Activated T-helper 2 cell treated with anti-CD3 and anti-CD28 coated beads, Interferon-gamma antibody, Interleukin-2, Interleukin-4, amounts not matched to agents 10 μg/mL and 5 μg/mL and 100 μg/mL, durations not matched to agents 14 hours and 24 hours and 36 hours (primary cell): ENCODE measurements at regions of chr3 and their contacts with region 1.

Region 1: DNA sequence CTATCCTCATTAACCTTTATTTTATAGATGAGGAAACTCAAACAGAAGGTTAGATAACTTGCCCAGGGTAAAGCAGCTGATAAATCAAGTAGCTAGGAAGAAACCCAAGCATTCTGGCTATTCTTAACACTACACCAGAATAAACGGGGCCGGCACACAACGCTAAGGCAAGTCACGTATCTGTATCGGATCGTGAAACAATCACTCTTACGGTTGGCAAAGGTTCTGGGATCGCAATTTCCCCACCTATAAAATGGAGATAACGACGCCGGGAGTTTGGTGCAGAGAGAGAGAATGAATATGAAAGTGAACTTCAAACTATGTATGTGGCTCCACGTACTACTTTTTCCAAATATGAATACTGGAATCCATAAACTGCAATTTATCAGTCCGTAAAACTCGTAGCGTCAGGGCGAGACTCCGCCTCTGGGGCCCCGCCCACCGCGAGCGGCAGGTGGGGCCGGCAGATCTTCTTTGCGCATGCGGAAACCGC is 252 bp upstream of the ARMC8 start:
- DNase-seq: peak; percentile 84
- H3K4me3 Mint-ChIP-seq: peak overlapping the region; percentile 90
- H3K27ac Mint-ChIP-seq: peak overlapping the region; percentile 91
- H3K4me1 Mint-ChIP-seq: peaks cover 25% of the 10 kb centered on the region
- H3K27me3 Mint-ChIP-seq: peaks cover 20% of the 10 kb centered on the region

Region 2: DNA sequence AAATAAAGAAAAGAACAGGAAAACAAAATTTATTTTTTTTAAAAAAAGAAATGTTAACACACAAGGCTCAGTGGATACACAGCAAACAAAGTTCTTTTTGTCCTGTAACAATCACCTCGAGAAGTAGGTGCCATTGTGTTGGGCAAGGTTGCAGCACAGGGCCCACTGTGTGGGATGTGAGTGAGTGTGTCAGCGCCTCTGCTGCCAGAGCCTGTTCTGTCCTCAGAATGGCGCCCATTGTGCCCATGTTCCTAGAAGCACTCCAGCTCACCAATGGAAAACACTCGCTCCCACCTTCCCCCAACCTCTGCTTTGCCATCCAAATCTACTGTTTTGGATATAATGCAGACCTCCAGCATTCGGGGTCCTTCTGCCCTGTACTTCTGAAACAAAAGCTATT is 261.8 kb before region 1 on chr3:
- intact Hi-C with region 1: no loop called
- DNase-seq: no peak
- H3K4me3 Mint-ChIP-seq: no peak overlapping the region
- H3K27ac Mint-ChIP-seq: no peak overlapping the region
- H3K4me1 Mint-ChIP-seq: no peaks in the 10 kb centered on the region
- H3K27me3 Mint-ChIP-seq: no peaks in the 10 kb centered on the region

Region 3: DNA sequence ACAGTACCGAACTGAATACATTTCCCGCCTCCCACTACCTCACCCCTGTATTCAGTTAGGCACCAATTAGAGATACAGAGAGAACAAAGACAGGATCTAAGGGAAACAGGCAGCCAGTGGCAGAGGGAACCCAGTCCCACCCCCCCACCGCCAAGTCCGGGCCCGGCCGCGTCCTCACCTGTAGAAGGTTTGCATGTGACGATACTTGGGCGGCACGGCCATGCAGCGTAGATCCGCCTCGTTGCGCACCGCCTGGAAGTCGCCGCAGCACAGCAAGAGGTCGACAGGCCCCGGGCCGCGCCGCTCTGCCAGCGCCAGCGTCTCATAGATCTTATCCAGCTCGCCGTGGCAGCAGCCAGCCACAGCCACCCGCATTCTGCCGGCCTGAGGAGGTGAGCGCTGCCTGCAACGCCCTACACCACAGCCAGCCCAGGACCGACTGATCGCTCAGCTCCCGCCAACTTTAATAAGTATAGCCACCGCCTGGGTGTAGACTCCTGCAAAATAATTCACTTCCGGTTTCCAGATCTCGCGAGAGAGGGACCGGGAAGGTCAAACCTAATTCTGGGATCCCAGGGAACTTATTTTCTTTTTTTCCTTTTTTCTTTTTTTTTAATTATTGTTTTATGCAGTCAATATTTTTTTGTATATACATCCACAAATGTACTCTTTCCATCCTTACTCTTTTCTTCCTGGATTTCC is 12.3 kb before region 1 on chr3 and contains the start of gene DBR1:
- intact Hi-C with region 1: loop called (anchors 1 kb)
- DNase-seq: peak; percentile 66
- H3K4me3 Mint-ChIP-seq: peak within 1 kb of the TSS; percentile 94
- H3K27ac Mint-ChIP-seq: peak within 1 kb of the TSS; percentile 92
- H3K4me1 Mint-ChIP-seq: peaks cover 29% of the 10 kb centered on the region
- H3K27me3 Mint-ChIP-seq: peaks cover 4% of the 10 kb centered on the region
- total RNA-seq, gene DBR1: 22.0 and 22.3 TPM in 2 replicates

Region 4: DNA sequence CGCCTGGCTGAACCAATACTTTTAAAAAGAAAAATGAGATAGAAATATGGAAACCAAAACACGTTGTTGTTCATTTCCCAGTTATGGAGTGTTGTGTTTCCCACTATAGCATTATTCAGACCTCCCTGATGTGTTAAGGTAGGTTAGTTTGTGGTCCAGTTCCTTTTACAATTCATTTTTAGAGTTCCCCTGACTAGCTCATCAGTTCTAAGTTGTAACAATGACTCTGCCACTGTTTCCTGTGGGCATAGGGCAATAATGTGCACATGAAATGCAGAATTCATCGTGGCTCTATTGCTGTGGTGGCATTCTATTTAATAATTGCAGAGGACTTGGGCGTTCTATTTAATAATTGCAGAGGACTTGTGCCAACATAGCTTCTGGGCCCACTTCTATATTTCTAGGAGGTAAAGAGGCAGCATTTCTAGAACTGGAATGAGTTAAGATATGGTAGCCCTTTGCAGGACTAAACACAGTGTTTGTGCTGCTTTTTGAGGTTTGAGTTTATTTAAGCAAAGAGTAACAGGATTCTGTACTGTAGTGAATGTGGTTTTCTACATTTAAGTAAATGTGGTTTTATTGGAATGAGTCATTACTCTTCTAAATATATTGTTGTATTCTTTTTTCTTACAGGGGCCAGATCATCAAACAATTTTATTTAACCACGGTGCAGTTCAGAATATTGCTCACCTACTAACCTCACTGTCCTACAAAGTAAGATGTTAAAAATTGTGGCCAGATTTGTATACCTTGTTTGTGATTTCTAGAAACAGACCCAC is 47.7 kb after region 1 on chr3:
- intact Hi-C with region 1: loop called (anchors 2 kb)
- DNase-seq: no peak
- H3K4me3 Mint-ChIP-seq: no peak overlapping the region
- H3K27ac Mint-ChIP-seq: peak overlapping the region; percentile 40
- H3K4me1 Mint-ChIP-seq: peaks cover 13% of the 10 kb centered on the region
- H3K27me3 Mint-ChIP-seq: no peaks in the 10 kb centered on the region

Region 5: GRCh38 chr3:138356730-138357405 is 170.0 kb after region 1 on chr3:
- intact Hi-C with region 1: no loop called
- DNase-seq: no peak
- H3K4me3 Mint-ChIP-seq: no peak overlapping the region
- H3K27ac Mint-ChIP-seq: no peak overlapping the region
- H3K4me1 Mint-ChIP-seq: no peaks in the 10 kb centered on the region
- H3K27me3 Mint-ChIP-seq: peaks cover 15% of the 10 kb centered on the region

Region 6: GRCh38 chr3:138434276-138434874 is 247.5 kb after region 1 on chr3 and contains the start of gene ESYT3:
- intact Hi-C with region 1: loop called (anchors 10 kb)
- DNase-seq: peak; percentile 57
- H3K4me3 Mint-ChIP-seq: peak within 1 kb of the TSS; percentile 70
- H3K27ac Mint-ChIP-seq: no peak within 1 kb of the TSS
- H3K4me1 Mint-ChIP-seq: peaks cover 8% of the 10 kb centered on the region
- H3K27me3 Mint-ChIP-seq: peaks cover 62% of the 10 kb centered on the region
- total RNA-seq, gene ESYT3: 0.09 and 0.32 TPM in 2 replicates

Region 7: DNA sequence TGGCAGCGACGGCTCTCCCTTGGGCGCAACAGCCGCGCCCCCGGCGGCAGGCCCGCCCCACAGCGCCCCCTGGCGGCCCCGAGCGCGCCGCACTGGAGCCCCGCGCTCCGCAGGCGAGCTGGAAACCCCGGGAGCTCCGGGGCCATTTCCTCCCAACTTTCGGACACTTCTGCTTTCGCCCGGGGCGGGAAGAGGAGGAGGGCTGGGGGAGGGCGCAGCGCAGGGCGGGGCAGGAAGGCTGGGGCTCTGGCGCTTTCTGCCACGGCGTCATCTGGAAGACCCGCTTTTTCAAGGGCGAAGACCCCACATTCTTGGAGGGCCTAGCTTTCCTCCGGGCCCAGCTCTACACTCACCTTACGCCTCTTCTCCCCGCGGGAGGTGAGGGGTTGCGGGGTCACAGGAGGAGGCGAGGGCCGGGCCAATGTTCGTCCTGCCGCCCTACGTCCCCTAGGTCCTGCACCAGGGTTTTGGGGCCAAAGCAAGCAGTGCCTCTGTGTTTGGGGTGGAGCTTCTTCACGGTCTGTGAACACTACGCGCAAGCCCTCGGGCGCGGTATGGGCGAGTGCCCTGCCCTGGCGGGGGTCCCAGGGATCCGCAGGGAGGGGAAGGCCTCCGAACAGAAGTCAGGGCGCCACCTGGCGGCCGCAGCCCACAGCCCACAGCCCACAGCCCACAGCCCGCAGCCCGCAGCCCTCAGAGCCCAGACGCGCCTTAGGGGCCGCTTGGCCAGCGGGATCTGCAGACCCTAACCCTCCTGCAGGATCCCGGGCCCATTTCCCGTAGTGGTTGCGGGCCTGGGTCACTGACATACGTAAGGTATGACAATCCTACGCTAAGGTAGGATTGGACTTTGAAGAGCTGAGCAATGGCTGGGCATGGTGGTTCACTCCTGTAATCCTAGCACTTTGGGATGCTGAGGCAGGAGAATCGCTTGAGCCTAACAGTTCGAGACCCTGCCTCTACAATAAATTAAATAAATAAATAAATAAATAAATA is 729.0 kb after region 1 on chr3:
- intact Hi-C with region 1: loop called (anchors 10 kb)
- DNase-seq: peak; percentile 71
- H3K4me3 Mint-ChIP-seq: peak overlapping the region; percentile 86
- H3K27ac Mint-ChIP-seq: no peak overlapping the region
- H3K4me1 Mint-ChIP-seq: peaks cover 5% of the 10 kb centered on the region
- H3K27me3 Mint-ChIP-seq: peaks cover 13% of the 10 kb centered on the region